ENCODE measurements at regions of chr12 and their contacts with region 1.

Region 1: GRCh38 chr12:93378373-93379325 is 924 bp downstream of the NUDT4 start:
- DNase-seq: peak; percentile 32
- H3K4me3 ChIP-seq: peak overlapping the region; percentile 91
- H3K27ac ChIP-seq: peak overlapping the region; percentile 88
- H3K27me3 ChIP-seq: no peaks in the 10 kb centered on the region
- CTCF ChIP-seq: no peak

Region 2: GRCh38 chr12:93243689-93244513 is 134.7 kb before region 1 on chr12:
- CTCF ChIA-PET with region 1: no interaction called
- POLR2A ChIA-PET with region 1: interaction called, 11 read pairs
- DNase-seq: peak; percentile 45
- H3K4me3 ChIP-seq: no peak overlapping the region
- H3K27ac ChIP-seq: no peak overlapping the region
- H3K27me3 ChIP-seq: no peaks in the 10 kb centered on the region
- CTCF ChIP-seq: no peak

Region 3: GRCh38 chr12:93603762-93604161 is 225.1 kb after region 1 on chr12:
- CTCF ChIA-PET with region 1: no interaction called
- POLR2A ChIA-PET with region 1: no interaction called
- DNase-seq: no peak
- H3K4me3 ChIP-seq: no peak overlapping the region
- H3K27ac ChIP-seq: no peak overlapping the region
- H3K27me3 ChIP-seq: no peaks in the 10 kb centered on the region
- CTCF ChIP-seq: no peak

Measured in AG04450 (cell line).